Adrenal gland (tissue), 19 donors: ENCODE measurements at regions of chr21 and their contacts with region 1.

Region 1: DNA sequence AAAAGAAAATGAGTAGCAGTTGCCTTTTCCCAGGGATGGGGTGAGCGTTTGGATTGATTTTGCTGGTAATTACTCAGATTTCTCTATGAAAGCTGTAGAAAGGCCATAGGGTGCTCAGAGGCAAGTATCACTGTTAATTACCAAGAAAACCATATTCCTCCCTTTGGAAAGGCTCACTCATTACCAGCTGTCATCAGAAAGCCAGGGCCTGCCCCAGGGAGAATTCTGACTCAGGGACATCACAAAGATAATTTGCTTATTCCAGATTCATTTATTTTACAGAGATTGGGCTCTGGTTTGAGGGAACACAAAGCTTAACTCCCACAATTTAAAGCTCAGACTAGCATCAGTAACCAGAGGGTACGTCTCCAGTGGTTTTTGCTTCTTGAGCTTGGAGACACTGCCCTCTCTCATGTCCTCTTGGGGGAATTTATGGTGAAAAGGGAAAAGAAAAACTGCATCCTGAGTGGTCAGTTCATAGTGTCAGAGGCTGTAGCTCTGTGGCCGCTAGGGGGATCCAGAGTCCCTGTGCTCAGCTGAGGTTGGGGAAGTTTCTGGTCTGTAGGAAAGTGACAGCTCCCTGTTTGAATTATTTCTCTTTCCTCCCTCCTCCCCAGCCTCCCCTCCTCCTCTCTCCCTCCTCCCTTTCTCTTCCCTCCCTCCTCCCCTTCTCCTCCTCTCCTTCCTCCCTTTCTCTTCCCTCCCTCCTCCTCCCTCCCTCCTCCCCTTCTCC is 204.3 kb downstream of the KCNJ6 start:
- DNase-seq: peak; percentile 50 to 83 (median 69)
- H3K4me3 ChIP-seq: no peak overlapping the region
- H3K27ac ChIP-seq: no peak overlapping the region
- H3K4me1 ChIP-seq: no peaks in the 10 kb centered on the region
- H3K27me3 ChIP-seq: peaks cover 3% of the 10 kb centered on the region
- CTCF ChIP-seq: peak; percentile 56 to 82 (median 73)
- POLR2A ChIP-seq: no peak

Region 2: GRCh38 chr21:37546299-37546908 is 165.6 kb before region 1 on chr21:
- intact Hi-C with region 1: no loop called
- DNase-seq: peak in 2 of 7 donors; percentile 9 to 40
- H3K4me3 ChIP-seq: no peak overlapping the region
- H3K27ac ChIP-seq: no peak overlapping the region
- H3K4me1 ChIP-seq: peaks cover 0 to 6% of the 10 kb centered on the region in 2 donors
- H3K27me3 ChIP-seq: no peaks in the 10 kb centered on the region
- CTCF ChIP-seq: no peak
- POLR2A ChIP-seq: no peak

Region 3: GRCh38 chr21:37916310-37917051 is 204.5 kb after region 1 on chr21 and contains the start of gene KCNJ6:
- intact Hi-C with region 1: loop called in 1 of 2 experiments (anchors 10 kb)
- DNase-seq: peak in 6 of 7 donors; percentile 15 to 57 (median 24)
- H3K4me3 ChIP-seq: no peak within 1 kb of the TSS
- H3K27ac ChIP-seq: no peak within 1 kb of the TSS
- H3K4me1 ChIP-seq: peaks cover 0 to 9% of the 10 kb centered on the region in 2 donors
- H3K27me3 ChIP-seq: peaks cover 35% of the 10 kb centered on the region
- CTCF ChIP-seq: peak in 5 of 6 experiments; percentile 10 to 48 (median 36)
- POLR2A ChIP-seq: no peak
- total RNA-seq, gene KCNJ6: 0.04 to 0.60 (median 0.07) TPM in 5 of 9 donors, not detected in the others

Region 4: GRCh38 chr21:38126669-38127303 is 414.8 kb after region 1 on chr21:
- intact Hi-C with region 1: loop called in 1 of 2 experiments (anchors 5 kb)
- DNase-seq: peak; percentile 23 to 79 (median 61)
- H3K4me3 ChIP-seq: no peak overlapping the region
- H3K27ac ChIP-seq: no peak overlapping the region
- H3K4me1 ChIP-seq: no peaks in the 10 kb centered on the region
- H3K27me3 ChIP-seq: peaks cover 9% of the 10 kb centered on the region
- CTCF ChIP-seq: peak; percentile 44 to 66 (median 54)
- POLR2A ChIP-seq: no peak

Region 5: GRCh38 chr21:38355992-38356797 is 644.2 kb after region 1 on chr21:
- intact Hi-C with region 1: loop called in 1 of 2 experiments (anchors 10 kb)
- DNase-seq: peak; percentile 72 to 88 (median 84)
- H3K4me3 ChIP-seq: no peak overlapping the region
- H3K27ac ChIP-seq: no peak overlapping the region
- H3K4me1 ChIP-seq: no peaks in the 10 kb centered on the region
- H3K27me3 ChIP-seq: no peaks in the 10 kb centered on the region
- CTCF ChIP-seq: peak; percentile 89 to 98 (median 95)
- POLR2A ChIP-seq: no peak